Activated B cell treated with CpG ODN at 0.5 μM for 24 hours (primary cell): ENCODE measurements at regions of chr7 and their contacts with region 1.

Region 1: DNA sequence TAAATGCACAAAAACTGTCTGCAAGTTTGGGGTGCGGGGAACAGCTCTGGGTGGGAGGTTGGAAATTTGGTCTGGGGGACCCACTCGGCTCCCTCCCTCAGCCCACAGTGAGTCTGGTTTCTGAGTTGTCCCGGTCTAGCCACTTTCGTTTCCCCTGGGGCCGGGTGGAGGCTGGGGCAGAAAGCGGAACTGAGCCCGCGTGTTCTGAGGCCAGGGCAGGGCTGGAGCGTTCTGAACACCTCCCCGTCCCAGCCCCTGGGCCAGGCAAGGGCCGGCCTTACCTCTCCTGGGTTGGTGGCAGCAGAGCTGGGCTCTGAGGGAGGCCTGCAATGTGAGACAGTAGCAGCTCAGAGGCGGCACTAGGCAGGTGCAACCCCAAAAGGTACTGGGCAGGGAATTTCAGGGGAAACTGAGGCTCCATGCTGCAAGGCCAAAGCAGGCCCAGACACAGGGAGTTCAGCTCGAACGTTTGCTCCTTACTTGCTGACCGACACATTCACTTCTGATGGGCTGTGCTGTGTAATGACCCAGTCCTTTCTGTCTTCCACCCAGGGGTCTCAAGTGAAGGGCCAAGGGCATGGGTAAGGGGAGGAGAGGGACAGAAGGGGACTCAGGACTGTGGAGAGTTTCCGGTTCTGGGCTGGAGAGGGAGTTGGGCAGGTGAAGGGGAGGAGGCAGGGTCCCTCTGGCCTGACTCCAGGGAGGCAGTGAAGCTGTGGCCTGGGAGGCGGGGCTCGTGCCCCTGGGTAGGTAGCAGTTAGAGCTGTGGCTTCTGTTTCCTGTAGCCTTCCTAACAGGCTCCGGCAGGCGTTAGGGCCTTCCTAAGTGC is 3.0 kb downstream of the IRF5 start:
- DNase-seq: peak; percentile 83
- ATAC-seq: peak; percentile 61
- H3K4me3 Mint-ChIP-seq: peak overlapping the region; percentile 97
- H3K27ac Mint-ChIP-seq: peak overlapping the region; percentile 94
- H3K4me1 Mint-ChIP-seq: peaks cover 65% of the 10 kb centered on the region
- H3K27me3 Mint-ChIP-seq: no peaks in the 10 kb centered on the region
- CTCF ChIP-seq: no peak

Region 2: DNA sequence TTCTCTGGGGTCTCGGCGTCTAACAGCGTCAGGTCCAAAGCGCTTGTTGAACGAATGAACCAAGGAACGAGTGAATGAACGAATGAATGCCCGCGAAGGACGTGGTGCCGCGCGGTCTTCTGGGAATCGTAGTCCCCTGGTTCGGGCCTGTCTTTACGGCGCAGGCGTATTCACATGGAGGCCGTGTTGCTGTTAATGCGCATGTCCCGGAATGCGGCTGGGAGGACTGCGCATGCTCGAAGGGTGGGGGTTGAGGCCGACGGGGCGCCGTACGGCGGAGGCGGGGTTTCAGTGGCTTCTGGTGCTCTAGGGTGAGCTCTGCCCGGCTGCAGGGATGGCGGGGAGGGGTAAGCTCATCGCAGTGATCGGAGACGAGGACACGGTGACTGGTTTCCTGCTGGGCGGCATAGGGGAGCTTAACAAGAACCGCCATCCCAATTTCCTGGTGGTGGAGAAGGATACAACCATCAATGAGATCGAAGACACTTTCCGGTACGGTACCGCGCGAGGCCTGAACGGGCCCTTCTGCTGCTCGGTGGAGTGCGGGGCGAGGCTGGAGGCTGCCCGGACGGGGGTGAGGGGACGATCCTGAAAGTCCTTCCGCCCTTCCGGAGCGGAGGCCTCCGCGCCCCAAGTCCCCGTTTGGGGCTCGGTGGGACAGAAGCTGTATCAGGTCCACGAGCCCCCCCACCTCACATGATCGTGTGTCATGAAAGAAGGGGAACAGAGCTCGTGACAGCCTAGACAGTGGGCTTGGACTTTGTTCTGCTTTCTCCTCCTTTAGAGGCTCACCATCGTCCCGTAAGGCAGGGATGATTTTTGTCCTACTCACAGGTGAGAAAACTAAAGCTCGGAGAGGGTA is 77.9 kb before region 1 on chr7 and contains the start of gene ATP6V1F:
- CTCF ChIA-PET with region 1: no interaction called
- POLR2A ChIA-PET with region 1: interaction called, 14 read pairs
- intact Hi-C with region 1: loop called (anchors 1 kb)
- DNase-seq: peak; percentile 99
- ATAC-seq: peak; percentile 92
- H3K4me3 Mint-ChIP-seq: peak within 1 kb of the TSS; percentile 97
- H3K27ac Mint-ChIP-seq: peak within 1 kb of the TSS; percentile 96
- H3K4me1 Mint-ChIP-seq: peaks cover 30% of the 10 kb centered on the region
- H3K27me3 Mint-ChIP-seq: no peaks in the 10 kb centered on the region
- CTCF ChIP-seq: no peak
- total RNA-seq, gene ATP6V1F: 100.0 and 113 TPM in 2 replicates

Region 3: GRCh38 chr7:128909625-128910257 is 31.0 kb before region 1 on chr7:
- CTCF ChIA-PET with region 1: interaction called, 4 read pairs
- POLR2A ChIA-PET with region 1: interaction called, 56 read pairs
- intact Hi-C with region 1: loop called (anchors 1 kb)
- DNase-seq: no peak
- ATAC-seq: no peak
- H3K4me3 Mint-ChIP-seq: peak overlapping the region; percentile 19
- H3K27ac Mint-ChIP-seq: no peak overlapping the region
- H3K4me1 Mint-ChIP-seq: peaks cover 18% of the 10 kb centered on the region
- H3K27me3 Mint-ChIP-seq: peaks cover 19% of the 10 kb centered on the region
- CTCF ChIP-seq: no peak

Region 4: GRCh38 chr7:128963327-128963757 is 22.6 kb after region 1 on chr7:
- CTCF ChIA-PET with region 1: interaction called, 6 read pairs
- POLR2A ChIA-PET with region 1: interaction called, 57 read pairs
- intact Hi-C with region 1: loop called (anchors 1 kb)
- DNase-seq: no peak
- ATAC-seq: peak; percentile 91
- H3K4me3 Mint-ChIP-seq: peak overlapping the region; percentile 57
- H3K27ac Mint-ChIP-seq: peak overlapping the region; percentile 86
- H3K4me1 Mint-ChIP-seq: peaks cover 37% of the 10 kb centered on the region
- H3K27me3 Mint-ChIP-seq: no peaks in the 10 kb centered on the region
- CTCF ChIP-seq: no peak

Region 5: DNA sequence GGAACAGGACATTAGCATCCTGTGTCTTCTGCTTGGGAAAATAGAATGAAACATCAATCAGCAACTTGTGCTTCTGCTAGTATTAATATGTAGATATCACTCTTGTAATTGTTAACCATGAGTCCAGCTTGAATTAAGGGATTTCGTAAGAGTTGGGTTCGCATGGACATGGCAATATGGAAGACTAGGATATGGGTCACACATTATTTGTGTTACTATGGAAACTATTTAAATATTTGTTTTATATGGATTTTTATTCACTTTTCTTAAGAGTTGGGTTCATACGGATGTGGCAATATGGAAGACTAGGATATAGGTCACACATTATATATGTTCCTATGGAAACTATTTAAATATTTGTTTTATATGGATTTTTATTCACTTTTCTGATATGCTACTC is 89.7 kb after region 1 on chr7:
- CTCF ChIA-PET with region 1: no interaction called
- POLR2A ChIA-PET with region 1: no interaction called
- intact Hi-C with region 1: no loop called
- DNase-seq: no peak
- ATAC-seq: no peak
- H3K4me3 Mint-ChIP-seq: no peak overlapping the region
- H3K27ac Mint-ChIP-seq: no peak overlapping the region
- H3K4me1 Mint-ChIP-seq: peaks cover 40% of the 10 kb centered on the region
- H3K27me3 Mint-ChIP-seq: no peaks in the 10 kb centered on the region
- CTCF ChIP-seq: no peak

Region 6: DNA sequence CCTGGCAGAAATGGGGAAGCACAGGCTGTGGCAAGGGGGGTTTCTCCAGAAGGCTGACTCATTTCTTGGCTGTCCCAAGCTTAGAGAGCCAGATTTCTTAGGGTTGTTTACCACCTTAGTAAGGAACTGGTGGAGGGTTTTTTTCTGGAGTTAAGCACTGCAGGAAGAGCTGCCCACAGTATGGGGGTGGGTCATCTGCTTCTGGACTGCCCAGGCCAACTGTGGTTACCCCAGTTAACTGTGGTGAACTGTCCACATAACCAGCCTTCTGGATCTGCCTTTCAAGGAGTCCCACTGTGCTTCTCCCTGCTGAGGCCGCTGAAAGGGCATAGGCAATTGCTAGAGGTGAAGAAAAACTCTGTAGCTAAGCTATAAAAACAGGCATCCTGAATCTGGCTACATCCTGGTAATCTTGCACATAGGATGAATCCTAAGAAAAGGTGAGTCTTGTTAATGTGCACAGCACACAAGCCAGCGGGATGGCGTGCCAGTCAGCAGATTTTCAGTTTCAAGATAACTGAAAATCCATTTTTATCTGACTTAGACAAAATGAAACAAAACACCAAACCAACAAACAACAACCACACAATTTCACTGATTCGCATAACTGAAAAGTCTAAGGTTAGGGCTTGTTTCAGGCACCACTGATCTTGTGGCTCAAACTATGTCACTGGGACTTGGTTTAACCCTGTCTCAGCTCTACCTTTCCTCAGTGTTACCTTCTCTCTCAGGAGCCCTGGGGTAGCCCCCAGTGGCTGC is 182.2 kb after region 1 on chr7:
- CTCF ChIA-PET with region 1: no interaction called
- POLR2A ChIA-PET with region 1: interaction called, 14 read pairs
- intact Hi-C with region 1: loop called (anchors 1 kb)
- DNase-seq: peak; percentile 53
- ATAC-seq: peak; percentile 89
- H3K4me3 Mint-ChIP-seq: peak overlapping the region; percentile 73
- H3K27ac Mint-ChIP-seq: peak overlapping the region; percentile 96
- H3K4me1 Mint-ChIP-seq: peaks cover 40% of the 10 kb centered on the region
- H3K27me3 Mint-ChIP-seq: no peaks in the 10 kb centered on the region
- CTCF ChIP-seq: no peak

Region 7: GRCh38 chr7:129144095-129144833 is 203.6 kb after region 1 on chr7 and contains the start of gene TSPAN33:
- CTCF ChIA-PET with region 1: no interaction called
- POLR2A ChIA-PET with region 1: interaction called, 45 read pairs
- intact Hi-C with region 1: loop called (anchors 1 kb)
- DNase-seq: peak; percentile 75
- ATAC-seq: peak; percentile 62
- H3K4me3 Mint-ChIP-seq: peak within 1 kb of the TSS; percentile 98
- H3K27ac Mint-ChIP-seq: peak within 1 kb of the TSS; percentile 99
- H3K4me1 Mint-ChIP-seq: peaks cover 48% of the 10 kb centered on the region
- H3K27me3 Mint-ChIP-seq: no peaks in the 10 kb centered on the region
- CTCF ChIP-seq: no peak
- total RNA-seq, gene TSPAN33: 332 and 341 TPM in 2 replicates